ENCODE measurements at regions of chr1 and their contacts with region 1.

Region 1: DNA sequence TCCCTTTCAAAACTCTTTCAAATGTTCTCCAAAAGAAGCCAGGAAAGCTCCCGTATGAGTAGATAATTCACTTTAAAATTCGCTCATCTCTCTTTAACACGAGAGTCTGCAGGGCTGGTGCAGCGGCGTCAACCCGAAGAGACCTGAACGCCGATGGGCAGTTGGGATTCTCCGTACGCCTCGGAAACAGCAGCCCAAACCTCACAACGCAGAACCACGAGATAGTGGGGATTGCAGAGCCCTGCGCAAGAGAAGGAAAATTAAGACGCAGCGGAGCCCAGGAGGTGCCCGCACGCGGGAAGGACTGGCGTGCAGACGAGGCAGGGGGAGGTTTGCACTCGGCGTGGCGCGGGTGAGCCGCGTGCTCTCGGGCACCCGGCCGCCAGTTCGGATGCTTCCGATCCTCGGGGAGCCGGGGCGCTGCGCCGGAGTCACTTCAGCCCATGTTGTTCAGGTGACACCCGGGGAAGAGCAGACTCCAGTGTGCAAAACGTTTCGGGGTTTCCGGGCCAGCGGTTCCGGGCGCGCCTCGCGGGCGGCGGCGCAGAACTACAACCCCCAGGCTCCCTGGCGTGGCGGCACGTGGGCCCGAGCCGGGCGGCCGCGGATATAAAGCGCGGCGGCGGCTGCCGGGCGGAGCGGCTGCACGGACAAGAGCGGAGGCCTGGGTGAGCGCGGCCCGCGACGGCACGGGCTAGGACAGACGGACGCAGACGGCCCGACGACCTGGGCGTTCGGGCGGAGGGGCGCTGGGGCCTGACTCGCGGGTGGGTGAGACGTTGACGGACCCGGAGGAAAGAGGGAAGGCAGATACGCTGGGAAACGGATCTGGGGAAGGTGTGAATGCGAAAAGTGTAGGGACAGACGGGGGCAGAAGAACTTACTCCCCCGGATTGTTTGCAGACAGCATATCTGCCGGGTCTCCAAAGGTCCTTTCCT is at the start of gene NPL:
- DNase-seq: peak; percentile 55 to 80
- H3K4me3 ChIP-seq: peak within 1 kb of the TSS; percentile 39
- H3K4me1 ChIP-seq: peaks cover 14% of the 10 kb centered on the region
- H3K27me3 ChIP-seq: peaks cover 6% of the 10 kb centered on the region

Region 2: GRCh38 chr1:182084487-182085316 is 704.7 kb before region 1 on chr1:
- in situ Hi-C with region 1: loop called (anchors 10 kb)
- DNase-seq: peak; percentile 61 to 87
- H3K4me3 ChIP-seq: no peak overlapping the region
- H3K4me1 ChIP-seq: no peaks in the 10 kb centered on the region
- H3K27me3 ChIP-seq: no peaks in the 10 kb centered on the region

Region 3: GRCh38 chr1:182446033-182446669 is 343.3 kb before region 1 on chr1:
- in situ Hi-C with region 1: loop called (anchors 10 kb)
- DNase-seq: peak; percentile 47 to 65
- H3K4me3 ChIP-seq: no peak overlapping the region
- H3K4me1 ChIP-seq: no peaks in the 10 kb centered on the region; the same call in 1 of the 2 replicates
- H3K27me3 ChIP-seq: no peaks in the 10 kb centered on the region

Region 4: DNA sequence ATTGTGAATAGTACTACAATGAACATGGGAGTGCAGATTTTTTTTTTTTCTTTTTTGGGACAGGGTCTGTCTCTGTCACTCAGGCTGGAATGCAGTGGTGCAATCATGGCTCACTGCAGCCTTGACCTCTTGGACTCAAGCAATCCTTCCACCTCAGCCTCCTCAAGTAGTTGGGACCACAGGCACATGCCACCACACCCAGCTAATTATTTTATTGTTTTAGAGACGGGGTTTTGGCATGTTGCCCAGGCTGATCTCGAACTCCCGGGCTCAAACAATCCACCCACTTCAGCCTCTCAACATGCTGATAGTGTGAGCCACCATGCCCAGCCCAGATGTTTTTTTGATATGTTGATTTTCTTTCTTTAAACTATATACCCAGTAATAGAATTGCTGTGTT is 281.7 kb before region 1 on chr1:
- in situ Hi-C with region 1: no loop called
- DNase-seq: no peak
- H3K4me3 ChIP-seq: no peak overlapping the region
- H3K4me1 ChIP-seq: no peaks in the 10 kb centered on the region
- H3K27me3 ChIP-seq: no peaks in the 10 kb centered on the region

Region 5: DNA sequence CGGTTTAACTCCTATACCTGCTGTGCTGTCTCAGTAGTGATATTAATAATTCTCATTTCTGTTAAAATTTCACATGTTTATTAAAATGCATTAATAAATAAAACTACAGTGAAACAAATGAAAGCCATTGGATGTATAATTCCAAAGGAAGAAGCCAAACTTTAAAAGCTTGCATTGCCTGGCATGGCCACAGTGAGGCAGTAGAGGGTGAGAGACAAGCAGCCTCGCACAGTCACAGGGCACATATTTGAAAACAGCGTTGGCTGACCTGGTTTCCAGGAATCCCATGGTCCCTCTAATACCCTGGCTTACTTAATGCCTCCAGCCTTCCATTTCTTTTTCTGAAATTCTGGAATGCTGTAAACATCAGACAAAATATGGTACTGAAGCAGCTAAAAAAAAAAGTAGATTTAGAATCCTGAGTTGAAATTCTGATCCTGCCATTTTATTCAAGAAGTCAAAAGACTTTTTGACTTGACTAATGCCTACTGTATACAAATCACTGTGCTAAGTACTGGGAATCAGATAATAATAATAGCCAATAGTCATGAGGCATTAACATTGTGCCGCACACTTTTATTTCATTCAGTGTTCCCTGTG is 193.7 kb before region 1 on chr1:
- in situ Hi-C with region 1: loop called (anchors 5 kb)
- DNase-seq: peak in 1 of 2 experiments; percentile 80
- H3K4me3 ChIP-seq: no peak overlapping the region
- H3K4me1 ChIP-seq: no peaks in the 10 kb centered on the region
- H3K27me3 ChIP-seq: no peaks in the 10 kb centered on the region

Region 6: DNA sequence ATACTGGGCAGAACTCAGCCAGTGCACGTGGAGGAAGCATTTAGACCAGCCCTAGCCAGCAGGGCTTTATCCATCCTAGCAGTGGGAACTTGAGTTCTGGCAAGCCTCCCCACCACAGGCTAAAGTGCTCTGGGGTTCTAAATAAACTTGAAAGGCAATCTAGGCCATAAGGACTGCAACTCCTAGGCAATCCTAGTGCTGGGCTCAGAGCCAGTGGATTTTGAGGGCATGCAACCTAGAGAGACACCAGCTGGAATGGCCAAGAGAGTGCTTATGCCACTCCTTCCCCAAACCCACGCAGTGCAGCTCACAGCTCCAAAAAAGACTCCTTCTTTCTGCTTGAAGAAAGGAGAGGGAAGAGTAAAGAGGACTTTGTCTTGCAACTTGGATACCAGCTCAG is 934.2 kb after region 1 on chr1:
- in situ Hi-C with region 1: no loop called
- DNase-seq: no peak
- H3K4me3 ChIP-seq: no peak overlapping the region
- H3K4me1 ChIP-seq: 0 out of 2 replicates have a peak, but pooled peaks cover 3% of the 10 kb centered on the region
- H3K27me3 ChIP-seq: no peaks in the 10 kb centered on the region

Measured in HAP-1 (cell line).